ENCODE measurements at regions of chr1 and their contacts with region 1.

Region 1: GRCh38 chr1:234125283-234125682 is 220.8 kb downstream of the SLC35F3 start:
- DNase-seq: no peak

Region 2: DNA sequence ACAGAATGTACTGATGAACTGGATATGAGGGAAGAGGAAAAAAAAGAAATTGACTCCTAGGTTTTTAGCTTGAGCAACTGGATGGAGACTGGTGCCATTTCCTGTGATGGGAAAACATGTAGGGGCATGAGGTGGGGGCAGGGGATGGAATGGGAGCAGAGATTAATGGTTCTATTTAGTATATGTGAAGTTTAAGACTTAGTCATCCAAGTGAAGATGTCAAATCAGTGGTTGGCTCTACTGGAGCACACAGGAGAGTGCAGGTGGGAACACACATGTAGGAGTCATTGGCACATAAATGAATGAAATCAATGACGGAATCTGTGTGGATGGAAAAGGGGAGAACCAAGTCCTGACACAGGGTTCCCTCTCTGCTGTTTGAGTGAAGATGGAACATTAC is 23.5 kb after region 1 on chr1:
- intact Hi-C with region 1: loop called in 1 of 2 experiments (anchors 1 kb)
- DNase-seq: no peak

Measured in posterior vena cava (tissue), 2 donors.